SK-N-SH (cell line): ENCODE measurements at regions of chr1 and their contacts with region 1.

Region 1: GRCh38 chr1:160291248-160292220 is 6.6 kb upstream of the PEX19 start:
- DNase-seq: peak; percentile 62
- H3K4me3 ChIP-seq: no peak overlapping the region
- H3K27ac ChIP-seq: no peak overlapping the region
- H3K4me1 ChIP-seq: no peaks in the 10 kb centered on the region
- H3K27me3 ChIP-seq: no peaks in the 10 kb centered on the region
- CTCF ChIP-seq: peak; percentile 86
- EP300 ChIP-seq: no peak
- RAD21 ChIP-seq: peak; percentile 61

Region 2: GRCh38 chr1:160046494-160047110 is 244.9 kb before region 1 on chr1:
- CTCF ChIA-PET with region 1: interaction called, 12 read pairs
- POLR2A ChIA-PET with region 1: no interaction called
- DNase-seq: peak; percentile 80
- H3K4me3 ChIP-seq: no peak overlapping the region
- H3K27ac ChIP-seq: no peak overlapping the region
- H3K4me1 ChIP-seq: peaks cover 0 to 11% of the 10 kb centered on the region in 2 experiments; a peak in 2 of 4 replicates
- H3K27me3 ChIP-seq: peaks cover 30% of the 10 kb centered on the region; the same call in 1 of the 2 replicates
- CTCF ChIP-seq: peak; percentile 67
- EP300 ChIP-seq: peak in 1 of 2 experiments; percentile 27; a peak in 1 of 4 replicates
- RAD21 ChIP-seq: peak; percentile 77

Region 3: DNA sequence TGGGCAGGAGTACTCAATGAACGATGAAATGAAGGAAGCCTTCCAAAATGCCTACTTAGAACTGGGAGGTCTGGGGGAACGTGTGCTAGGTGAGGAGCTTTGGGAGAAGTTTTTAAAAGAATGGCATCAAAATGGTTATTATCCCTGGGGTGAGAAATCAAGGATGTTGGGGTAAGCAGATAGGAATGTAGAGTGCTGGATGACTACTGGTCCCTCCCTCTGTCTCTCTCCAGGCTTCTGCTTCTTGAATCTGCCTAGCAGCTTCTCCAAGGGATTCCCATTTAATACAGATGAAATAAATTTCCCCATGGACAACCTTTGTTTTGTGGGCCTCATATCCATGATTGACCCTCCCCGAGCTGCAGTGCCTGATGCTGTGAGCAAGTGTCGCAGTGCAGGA is 120.2 kb before region 1 on chr1:
- CTCF ChIA-PET with region 1: interaction called, 10 read pairs
- POLR2A ChIA-PET with region 1: no interaction called
- DNase-seq: no peak
- H3K4me3 ChIP-seq: no peak overlapping the region
- H3K27ac ChIP-seq: no peak overlapping the region
- H3K4me1 ChIP-seq: no peaks in the 10 kb centered on the region
- H3K27me3 ChIP-seq: no peaks in the 10 kb centered on the region; the same call in 1 of the 2 replicates
- CTCF ChIP-seq: no peak
- EP300 ChIP-seq: no peak
- RAD21 ChIP-seq: no peak

Region 4: DNA sequence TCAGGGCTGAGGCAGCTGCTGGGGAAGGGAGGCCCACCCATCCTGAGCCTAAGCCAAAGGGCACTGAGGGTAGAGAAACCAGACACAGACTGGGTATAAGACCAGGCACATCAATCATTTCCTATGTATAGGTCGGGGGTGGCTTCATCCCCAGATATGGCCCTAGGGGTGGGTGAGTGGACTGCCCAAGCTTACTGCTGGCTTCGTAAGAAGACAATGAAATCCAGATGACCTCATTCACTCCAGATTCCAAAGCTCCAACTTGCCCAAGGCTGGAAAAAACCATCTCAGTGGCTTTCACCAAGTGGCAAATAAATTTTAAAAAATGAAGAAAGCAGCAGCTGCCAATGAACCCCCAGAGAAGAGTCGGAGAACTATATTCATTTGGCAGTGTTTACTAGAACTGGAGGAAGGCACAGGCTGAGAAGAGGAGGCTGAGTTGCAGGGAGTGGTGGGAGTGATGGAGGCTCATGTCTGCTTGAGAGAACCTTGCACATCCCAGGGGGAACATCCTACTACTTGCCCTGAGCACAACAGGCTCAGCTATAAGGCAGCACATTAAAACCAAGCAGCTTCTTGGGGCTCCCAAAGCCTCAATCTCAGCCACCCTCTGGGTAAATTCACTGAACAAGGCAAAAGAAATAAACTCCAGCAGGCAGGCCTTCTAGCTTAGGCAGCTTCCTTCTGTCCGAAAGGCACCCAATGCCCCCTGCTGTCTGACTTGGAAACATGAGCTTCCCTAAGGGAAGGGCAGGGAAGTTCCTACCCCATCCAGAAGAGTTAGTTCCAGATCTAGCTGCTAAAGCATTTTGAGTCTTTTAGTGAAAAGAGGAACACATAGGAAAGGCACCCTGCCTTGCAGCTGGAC is 72.2 kb before region 1 on chr1:
- CTCF ChIA-PET with region 1: interaction called, 10 read pairs
- POLR2A ChIA-PET with region 1: no interaction called
- DNase-seq: peak; percentile 55
- H3K4me3 ChIP-seq: no peak overlapping the region; a peak in 1 of 4 replicates
- H3K27ac ChIP-seq: peak overlapping the region; percentile 31 to 55
- H3K4me1 ChIP-seq: peaks cover 11 to 18% of the 10 kb centered on the region in 2 experiments; a peak in 3 of 4 replicates
- H3K27me3 ChIP-seq: no peaks in the 10 kb centered on the region
- CTCF ChIP-seq: peak; percentile 72
- EP300 ChIP-seq: no peak
- RAD21 ChIP-seq: peak; percentile 81

Region 5: GRCh38 chr1:160277330-160277729 is 14.2 kb before region 1 on chr1:
- CTCF ChIA-PET with region 1: interaction called, 38 read pairs
- POLR2A ChIA-PET with region 1: no interaction called
- DNase-seq: no peak
- H3K4me3 ChIP-seq: no peak overlapping the region
- H3K27ac ChIP-seq: no peak overlapping the region
- H3K4me1 ChIP-seq: no peaks in the 10 kb centered on the region
- H3K27me3 ChIP-seq: no peaks in the 10 kb centered on the region
- CTCF ChIP-seq: no peak
- EP300 ChIP-seq: no peak
- RAD21 ChIP-seq: no peak

Region 6: DNA sequence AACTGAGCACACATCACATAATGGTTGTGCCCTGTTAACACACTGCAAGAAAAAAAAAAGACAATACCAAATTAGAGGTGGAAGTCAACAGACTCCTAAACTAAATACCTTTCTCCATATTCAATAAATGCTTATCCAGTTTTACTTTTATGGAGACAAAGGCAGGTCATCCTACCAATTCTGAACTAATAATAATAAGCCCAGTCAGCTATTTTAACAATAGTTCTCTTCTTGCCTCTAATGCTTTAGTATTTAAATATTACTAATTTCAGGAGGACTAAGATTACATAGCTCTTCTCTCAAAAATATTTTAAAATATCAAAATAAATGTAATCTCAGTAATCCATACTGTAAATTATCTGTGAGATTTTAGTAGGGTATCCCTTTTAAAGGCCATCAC is 41.0 kb after region 1 on chr1:
- CTCF ChIA-PET with region 1: interaction called, 27 read pairs
- POLR2A ChIA-PET with region 1: no interaction called
- DNase-seq: no peak
- H3K4me3 ChIP-seq: no peak overlapping the region
- H3K27ac ChIP-seq: no peak overlapping the region
- H3K4me1 ChIP-seq: no peaks in the 10 kb centered on the region
- H3K27me3 ChIP-seq: no peaks in the 10 kb centered on the region
- CTCF ChIP-seq: no peak
- EP300 ChIP-seq: no peak
- RAD21 ChIP-seq: no peak

Region 7: DNA sequence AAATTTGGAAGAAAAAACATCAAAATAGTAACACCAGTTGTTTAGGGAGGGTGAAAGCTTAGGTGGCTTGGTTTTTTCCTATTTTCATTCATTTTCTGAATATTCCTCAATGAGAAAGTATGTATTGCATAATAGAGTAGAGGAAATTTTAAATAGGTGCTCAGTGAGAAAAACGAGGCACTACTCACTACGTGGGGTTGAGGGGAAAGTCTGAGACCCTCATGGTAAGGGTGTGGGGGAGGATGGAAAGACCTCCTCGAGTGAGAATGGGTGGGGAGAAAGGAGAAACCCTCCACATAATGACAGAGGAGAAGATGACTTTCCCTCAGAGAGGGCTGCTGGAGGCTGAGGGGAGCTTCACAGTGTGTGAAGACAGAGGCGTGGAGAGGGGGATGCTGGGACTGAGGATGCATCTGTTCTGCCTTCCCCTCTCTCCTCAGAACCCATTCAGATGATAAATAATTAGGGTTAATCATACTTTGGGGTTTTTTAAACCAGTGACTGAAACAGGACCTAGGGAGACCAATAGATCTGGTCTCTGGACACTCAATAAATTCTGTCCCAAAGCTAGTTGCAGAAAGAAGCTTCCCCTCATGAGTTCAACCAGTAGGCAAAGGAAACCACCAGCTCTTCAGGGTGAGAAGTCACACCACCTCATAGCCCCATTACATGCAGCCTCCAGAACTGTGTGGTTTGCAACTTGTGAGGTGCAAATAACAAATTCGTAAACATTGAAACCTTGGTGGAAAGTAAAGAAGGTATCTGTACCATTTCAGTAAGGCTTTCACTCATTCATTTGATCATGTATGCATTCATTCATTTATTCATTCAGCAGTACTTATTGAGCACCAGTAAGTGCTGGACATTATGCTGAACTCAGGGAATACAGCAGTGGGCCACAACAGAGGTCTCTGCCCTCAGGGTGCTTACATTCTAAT is 464.6 kb after region 1 on chr1:
- CTCF ChIA-PET with region 1: no interaction called
- POLR2A ChIA-PET with region 1: no interaction called
- DNase-seq: no peak
- H3K4me3 ChIP-seq: no peak overlapping the region
- H3K27ac ChIP-seq: no peak overlapping the region
- H3K4me1 ChIP-seq: no peaks in the 10 kb centered on the region
- H3K27me3 ChIP-seq: peaks cover 13% of the 10 kb centered on the region; the same call in 1 of the 2 replicates
- CTCF ChIP-seq: no peak
- EP300 ChIP-seq: no peak
- RAD21 ChIP-seq: no peak